ENCODE measurements at regions of chr7 and their contacts with region 1.

Region 1: DNA sequence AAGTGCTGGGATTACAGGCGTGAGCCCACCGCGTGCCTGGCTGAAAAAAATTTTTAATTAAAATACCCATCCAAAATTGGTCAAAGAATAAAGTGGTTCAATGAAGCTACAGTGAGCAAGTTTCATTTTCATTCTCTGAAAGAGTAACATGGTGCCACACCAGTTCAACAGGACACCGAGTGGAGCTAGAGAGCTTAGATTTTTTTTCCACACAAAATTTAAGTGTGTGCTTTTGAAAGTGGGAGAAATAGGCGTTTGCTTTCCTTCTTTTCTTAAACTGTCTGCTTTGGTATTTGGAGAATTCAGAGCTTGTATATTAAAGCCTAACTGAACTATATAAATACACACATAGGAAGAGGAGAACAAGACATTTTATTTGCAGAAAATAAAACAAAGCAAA is 43.4 kb downstream of the BPGM start:
- DNase-seq: no peak
- H3K4me3 ChIP-seq: peak overlapping the region; percentile 48 to 68
- H3K27ac ChIP-seq: peak overlapping the region; percentile 95
- H3K4me1 ChIP-seq: peaks cover 12 to 45% of the 10 kb centered on the region in 2 donors
- H3K27me3 ChIP-seq: no peaks in the 10 kb centered on the region
- CTCF ChIP-seq: peak; percentile 52 to 72 (median 60)

Region 2: GRCh38 chr7:134724606-134725005 is 34.6 kb after region 1 on chr7:
- intact Hi-C with region 1: no loop called
- DNase-seq: no peak
- H3K4me3 ChIP-seq: no peak overlapping the region
- H3K27ac ChIP-seq: peak overlapping the region; percentile 24 to 71
- H3K4me1 ChIP-seq: peaks cover 7 to 56% of the 10 kb centered on the region in 2 donors
- H3K27me3 ChIP-seq: no peaks in the 10 kb centered on the region
- CTCF ChIP-seq: peak; percentile 11 to 43 (median 13)

Region 3: GRCh38 chr7:134778941-134779740 is 89.1 kb after region 1 on chr7 and contains the start of gene CALD1:
- intact Hi-C with region 1: loop called (anchors 1 kb)
- DNase-seq: peak; percentile 74 to 97
- H3K4me3 ChIP-seq: peak within 1 kb of the TSS; percentile 69 to 73
- H3K27ac ChIP-seq: peak within 1 kb of the TSS; percentile 82 to 94
- H3K4me1 ChIP-seq: peaks cover 4 to 15% of the 10 kb centered on the region in 2 donors
- H3K27me3 ChIP-seq: no peaks in the 10 kb centered on the region
- CTCF ChIP-seq: no peak
- total RNA-seq, gene CALD1: 352 TPM

Region 4: DNA sequence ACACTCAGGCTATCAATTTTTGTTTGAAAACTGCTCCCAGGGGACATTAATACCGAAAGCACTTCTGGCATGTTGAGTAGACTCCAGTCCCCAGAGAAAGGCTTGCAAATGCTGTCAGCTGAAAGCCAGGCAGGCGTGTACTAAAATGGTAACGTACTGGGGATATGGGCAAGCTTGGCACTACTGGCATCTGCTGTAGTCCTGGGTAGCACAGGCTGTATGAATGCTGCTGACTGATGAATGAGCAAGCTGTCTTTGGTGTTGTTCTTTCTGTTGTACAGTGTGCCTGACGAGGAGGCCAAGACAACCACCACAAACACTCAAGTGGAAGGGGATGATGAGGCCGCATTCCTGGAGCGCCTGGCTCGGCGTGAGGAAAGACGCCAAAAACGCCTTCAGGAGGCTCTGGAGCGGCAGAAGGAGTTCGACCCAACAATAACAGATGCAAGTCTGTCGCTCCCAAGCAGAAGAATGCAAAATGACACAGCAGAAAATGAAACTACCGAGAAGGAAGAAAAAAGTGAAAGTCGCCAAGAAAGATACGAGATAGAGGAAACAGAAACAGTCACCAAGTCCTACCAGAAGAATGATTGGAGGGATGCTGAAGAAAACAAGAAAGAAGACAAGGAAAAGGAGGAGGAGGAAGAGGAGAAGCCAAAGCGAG is 242.8 kb after region 1 on chr7:
- intact Hi-C with region 1: loop called (anchors 2 kb)
- DNase-seq: peak; percentile 23 to 91
- H3K4me3 ChIP-seq: peak overlapping the region; percentile 7 to 28
- H3K27ac ChIP-seq: peak overlapping the region; percentile 74 to 90
- H3K4me1 ChIP-seq: peaks cover 32 to 49% of the 10 kb centered on the region in 2 donors
- H3K27me3 ChIP-seq: no peaks in the 10 kb centered on the region
- CTCF ChIP-seq: no peak

Region 5: DNA sequence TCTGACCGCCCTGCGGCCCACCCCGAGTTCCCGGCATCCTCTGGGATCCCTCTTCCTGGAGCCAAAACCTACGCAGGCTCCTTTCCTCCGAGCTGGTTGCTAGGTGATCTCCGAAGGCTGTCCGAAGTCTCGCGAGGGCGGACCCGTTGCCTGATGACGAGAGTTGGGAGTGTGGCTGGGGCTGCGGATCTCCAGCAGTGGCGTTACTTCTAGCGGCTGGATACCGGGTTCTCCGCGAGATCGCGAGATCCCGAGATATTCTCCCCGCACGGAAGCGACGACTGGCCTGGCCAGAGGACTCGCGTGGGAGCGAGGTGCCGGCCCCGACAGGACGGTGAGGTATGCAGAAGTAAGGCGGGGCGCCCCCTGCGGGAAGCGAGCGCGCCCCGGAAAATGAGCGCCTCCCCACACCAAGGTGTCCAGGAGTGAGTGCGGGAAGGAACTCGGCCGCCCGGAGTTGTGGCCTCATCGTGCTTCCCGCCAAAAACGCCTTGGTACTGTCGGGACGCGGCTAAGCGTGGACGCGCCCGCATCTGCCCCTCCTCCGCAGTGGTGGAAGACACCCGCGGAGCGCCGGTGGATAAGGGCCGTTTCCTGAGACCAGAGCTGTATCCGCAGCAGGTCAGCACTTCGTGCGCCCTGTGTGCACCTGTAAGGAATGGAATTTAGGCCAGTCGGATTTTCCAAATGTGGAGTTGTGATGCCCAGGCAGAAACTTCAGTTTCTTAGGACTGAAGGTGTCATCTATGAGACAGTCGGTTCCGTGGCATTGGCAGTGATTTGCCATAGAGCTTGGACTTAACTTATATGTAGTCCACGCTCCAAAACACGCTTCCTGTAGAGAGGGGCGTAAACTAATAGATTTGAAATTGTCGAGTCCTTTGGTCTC is 296.6 kb after region 1 on chr7 and contains the start of gene AGBL3:
- intact Hi-C with region 1: loop called (anchors 2 kb)
- DNase-seq: peak; percentile 89 to 99
- H3K4me3 ChIP-seq: peak within 1 kb of the TSS; percentile 72 to 73
- H3K27ac ChIP-seq: peak within 1 kb of the TSS; percentile 86 to 87
- H3K4me1 ChIP-seq: peaks cover 0 to 18% of the 10 kb centered on the region in 2 donors
- H3K27me3 ChIP-seq: no peaks in the 10 kb centered on the region
- CTCF ChIP-seq: peak; percentile 51 to 74 (median 67)
- total RNA-seq, gene AGBL3: 2.8 TPM

Region 6: GRCh38 chr7:135274495-135275268 is 584.7 kb after region 1 on chr7:
- intact Hi-C with region 1: loop called (anchors 5 kb)
- DNase-seq: peak in 1 of 2 donors; percentile 73
- H3K4me3 ChIP-seq: no peak overlapping the region
- H3K27ac ChIP-seq: no peak overlapping the region
- H3K4me1 ChIP-seq: no peaks in the 10 kb centered on the region
- H3K27me3 ChIP-seq: no peaks in the 10 kb centered on the region
- CTCF ChIP-seq: peak; percentile 56 to 87 (median 84)

Measured in ascending aorta (tissue), 2 donors.